Naive thymus-derived CD8-positive, alpha-beta T cell (primary cell): ENCODE measurements at regions of chrX and their contacts with region 1.

Region 1: GRCh38 chrX:78103623-78104446 is at the start of gene PGK1:
- DNase-seq: peak; percentile 81 to 97 (median 92)
- ATAC-seq: peak; percentile 94 to 96
- H3K4me3 Mint-ChIP-seq: peak within 1 kb of the TSS; percentile 86 to 96 (median 94)
- H3K27ac Mint-ChIP-seq: peak within 1 kb of the TSS; percentile 90 to 98 (median 94)
- H3K4me1 Mint-ChIP-seq: peaks cover 14 to 49% (median 45%) of the 10 kb centered on the region in 4 donors
- H3K27me3 Mint-ChIP-seq: no peaks in the 10 kb centered on the region
- polyA plus RNA-seq, gene PGK1: 501 to 515 (median 513) TPM

Region 2: DNA sequence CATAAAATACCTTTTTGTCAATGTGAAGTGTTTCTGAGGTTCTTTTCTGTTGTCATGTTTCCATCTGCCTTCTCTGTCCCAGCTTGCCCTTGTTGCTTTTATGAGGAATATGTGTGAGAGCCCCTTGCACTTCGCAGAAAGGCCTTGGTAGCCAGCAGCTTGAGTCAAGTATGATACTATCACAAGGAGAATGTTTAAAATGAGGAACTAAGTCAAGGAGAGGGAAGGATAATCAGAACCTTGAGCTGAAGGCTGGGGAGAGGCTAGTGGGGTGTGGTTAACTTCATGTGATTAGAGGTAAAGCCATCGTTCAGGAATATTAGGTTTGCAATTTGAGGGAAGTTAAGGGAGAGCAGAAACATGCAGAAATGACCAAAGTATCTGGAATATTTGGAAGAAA is 12.9 kb after region 1 on chrX:
- POLR2A ChIA-PET with region 1: interaction called, 15 read pairs
- DNase-seq: no peak
- ATAC-seq: no peak
- H3K4me3 Mint-ChIP-seq: peak overlapping the region in 5 of 10 donors; percentile 0 to 49 (median 22)
- H3K27ac Mint-ChIP-seq: peak overlapping the region; percentile 1 to 88 (median 66)
- H3K4me1 Mint-ChIP-seq: peaks cover 17 to 70% (median 50%) of the 10 kb centered on the region in 4 donors
- H3K27me3 Mint-ChIP-seq: no peaks in the 10 kb centered on the region